Transverse colon (tissue), 4 donors: ENCODE measurements at regions of chr17 and their contacts with region 1.

Region 1: DNA sequence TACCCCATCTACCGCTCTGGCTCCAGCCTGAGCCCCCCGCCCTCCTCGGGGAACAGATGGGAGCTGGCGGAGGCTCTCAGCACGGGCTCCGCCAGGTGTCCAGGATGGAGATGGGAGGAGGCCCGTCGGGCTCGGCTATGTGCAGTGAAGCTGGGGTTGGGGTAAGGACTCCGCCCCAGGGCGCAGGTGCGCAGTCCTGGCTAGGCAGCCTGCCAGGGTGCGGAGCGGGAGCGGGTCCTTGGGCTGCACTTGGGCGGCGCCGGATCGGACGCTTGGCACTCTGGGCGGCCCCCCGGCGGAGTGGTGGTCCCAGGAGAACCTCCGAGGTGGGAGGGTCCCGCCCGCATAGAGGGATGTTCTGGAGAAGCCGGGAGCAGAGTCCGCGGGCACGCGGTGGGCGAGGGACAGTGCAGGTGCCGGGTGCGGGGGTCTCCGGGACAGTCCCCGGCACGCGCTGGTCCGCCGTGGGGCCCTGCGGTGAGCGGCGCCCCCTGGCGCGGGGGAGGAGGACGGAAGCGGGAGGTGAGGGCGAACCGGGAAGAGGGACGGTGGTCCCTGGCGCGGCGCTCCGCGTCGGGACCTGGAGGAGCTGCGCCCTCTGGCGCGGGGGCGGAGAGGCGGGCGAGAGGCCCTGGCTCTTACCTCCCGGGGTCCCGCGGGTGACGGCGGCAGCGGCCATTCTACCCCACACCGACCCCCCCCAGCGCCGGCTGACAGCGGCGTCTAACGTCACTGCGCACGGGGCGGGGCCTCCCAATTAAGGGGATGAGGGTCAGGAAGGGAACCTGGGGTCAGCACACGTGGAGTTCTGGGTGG is at the start of gene CAMTA2:
- DNase-seq: peak; percentile 93
- H3K4me3 ChIP-seq: peak within 1 kb of the TSS; percentile 66 to 91 (median 84)
- H3K27ac ChIP-seq: peak within 1 kb of the TSS; percentile 93 to 97 (median 94)
- H3K4me1 ChIP-seq: peaks cover 13 to 28% (median 27%) of the 10 kb centered on the region in 4 donors
- H3K27me3 ChIP-seq: no peaks in the 10 kb centered on the region
- CTCF ChIP-seq: peak; percentile 60 to 91 (median 75)
- EP300 ChIP-seq: no peak
- POLR2A ChIP-seq: peak; percentile 79
- total RNA-seq, gene CAMTA2: 35.9 to 71.8 (median 51.8) TPM

Region 2: DNA sequence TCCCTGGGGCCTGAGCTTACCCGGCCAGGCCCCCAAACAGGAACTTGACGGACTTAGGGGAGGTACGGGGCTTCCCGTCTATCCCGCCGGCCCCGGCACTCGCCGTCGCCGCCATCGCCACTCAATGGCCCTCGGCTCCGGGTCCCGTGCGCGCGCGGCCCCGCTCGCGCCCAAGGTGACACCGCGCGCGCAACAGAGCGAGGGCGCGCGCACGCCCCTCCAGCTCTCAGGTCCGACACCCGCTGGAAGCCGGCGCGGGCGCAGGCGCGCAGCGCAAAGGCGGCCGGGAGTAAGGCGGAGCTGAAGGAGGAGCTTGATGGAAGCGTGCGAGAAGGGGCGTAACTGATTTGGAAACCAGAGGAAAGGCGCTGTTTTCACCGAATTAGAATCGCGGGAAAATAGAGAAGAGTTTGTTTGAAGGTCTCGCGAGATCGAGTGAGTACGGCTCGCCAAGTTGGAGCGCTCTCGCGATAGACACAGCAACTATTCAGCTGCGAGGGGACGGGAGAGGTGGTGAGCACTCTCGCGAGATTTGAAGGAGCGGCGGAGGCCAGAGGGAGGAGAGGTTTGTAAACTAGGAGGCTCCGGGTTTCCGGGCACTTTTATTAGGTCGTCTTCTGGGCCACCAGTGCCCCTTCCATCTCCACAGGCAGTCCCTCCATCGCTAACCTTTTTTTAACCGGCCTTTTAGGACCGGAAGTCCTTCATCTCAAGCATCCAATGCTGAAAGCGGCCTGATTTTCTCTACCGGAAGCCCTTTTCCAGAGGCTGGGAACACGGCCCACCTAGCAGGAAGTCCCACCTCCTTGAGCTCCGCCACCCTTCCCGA is 47.1 kb before region 1 on chr17 and contains the starts of genes RNF167 and SLC25A11:
- in situ Hi-C with region 1: no loop called
- intact Hi-C with region 1: loop called (anchors 10 kb)
- DNase-seq: peak; percentile 96
- H3K4me3 ChIP-seq: peak within 1 kb of the TSS; percentile 74 to 87 (median 80)
- H3K27ac ChIP-seq: peak within 1 kb of the TSS; percentile 96 to 97 (median 96)
- H3K4me1 ChIP-seq: peaks cover 30 to 58% (median 31%) of the 10 kb centered on the region in 4 donors
- H3K27me3 ChIP-seq: no peaks in the 10 kb centered on the region
- CTCF ChIP-seq: no peak
- EP300 ChIP-seq: no peak
- POLR2A ChIP-seq: peak; percentile 73
- total RNA-seq, gene RNF167: 57.2 to 348 (median 73.7) TPM
- total RNA-seq, gene SLC25A11: 62.4 to 120 (median 83.9) TPM

Region 3: DNA sequence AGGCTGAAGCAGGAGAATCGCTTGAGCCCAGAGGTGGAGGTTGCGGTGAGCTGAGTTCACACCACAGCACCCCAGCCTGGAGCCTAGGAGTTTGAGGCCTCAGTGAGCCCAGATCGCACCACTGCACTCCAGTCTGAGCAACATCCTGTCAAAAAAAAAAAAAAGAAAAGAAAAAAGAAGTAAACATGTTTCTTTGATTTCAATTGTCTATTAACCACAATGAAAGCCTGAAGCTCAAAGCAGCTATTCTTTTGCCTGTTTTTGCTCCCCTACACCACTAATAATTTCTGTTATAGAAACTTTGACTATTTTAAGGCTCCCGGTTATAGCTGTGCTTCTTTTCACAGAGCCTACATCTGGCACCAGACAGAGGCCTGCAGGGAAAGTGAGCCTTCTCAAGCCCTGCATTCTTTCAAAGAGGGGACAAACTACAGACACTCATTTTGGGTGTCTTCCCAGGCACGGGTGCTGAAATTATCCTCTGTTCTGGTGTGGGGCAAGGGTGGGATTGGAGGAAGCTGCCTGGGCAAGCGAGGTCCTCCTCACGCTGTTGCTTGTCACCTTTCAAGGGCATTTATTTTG is 62.2 kb after region 1 on chr17:
- in situ Hi-C with region 1: no loop called
- intact Hi-C with region 1: no loop called
- DNase-seq: peak; percentile 46
- H3K4me3 ChIP-seq: no peak overlapping the region
- H3K27ac ChIP-seq: peak overlapping the region; percentile 74 to 84 (median 78)
- H3K4me1 ChIP-seq: peaks cover 11 to 50% (median 23%) of the 10 kb centered on the region in 4 donors
- H3K27me3 ChIP-seq: no peaks in the 10 kb centered on the region
- CTCF ChIP-seq: no peak
- EP300 ChIP-seq: no peak
- POLR2A ChIP-seq: no peak